ENCODE measurements at regions of chr1 and their contacts with region 1.

Region 1: GRCh38 chr1:196450143-196451095 is 157.8 kb downstream of the KCNT2 start:
- DNase-seq: no peak
- H3K4me3 ChIP-seq: no peak overlapping the region
- H3K27ac ChIP-seq: no peak overlapping the region
- H3K4me1 ChIP-seq: no peaks in the 10 kb centered on the region
- H3K27me3 ChIP-seq: no peaks in the 10 kb centered on the region
- CTCF ChIP-seq: no peak

Region 2: DNA sequence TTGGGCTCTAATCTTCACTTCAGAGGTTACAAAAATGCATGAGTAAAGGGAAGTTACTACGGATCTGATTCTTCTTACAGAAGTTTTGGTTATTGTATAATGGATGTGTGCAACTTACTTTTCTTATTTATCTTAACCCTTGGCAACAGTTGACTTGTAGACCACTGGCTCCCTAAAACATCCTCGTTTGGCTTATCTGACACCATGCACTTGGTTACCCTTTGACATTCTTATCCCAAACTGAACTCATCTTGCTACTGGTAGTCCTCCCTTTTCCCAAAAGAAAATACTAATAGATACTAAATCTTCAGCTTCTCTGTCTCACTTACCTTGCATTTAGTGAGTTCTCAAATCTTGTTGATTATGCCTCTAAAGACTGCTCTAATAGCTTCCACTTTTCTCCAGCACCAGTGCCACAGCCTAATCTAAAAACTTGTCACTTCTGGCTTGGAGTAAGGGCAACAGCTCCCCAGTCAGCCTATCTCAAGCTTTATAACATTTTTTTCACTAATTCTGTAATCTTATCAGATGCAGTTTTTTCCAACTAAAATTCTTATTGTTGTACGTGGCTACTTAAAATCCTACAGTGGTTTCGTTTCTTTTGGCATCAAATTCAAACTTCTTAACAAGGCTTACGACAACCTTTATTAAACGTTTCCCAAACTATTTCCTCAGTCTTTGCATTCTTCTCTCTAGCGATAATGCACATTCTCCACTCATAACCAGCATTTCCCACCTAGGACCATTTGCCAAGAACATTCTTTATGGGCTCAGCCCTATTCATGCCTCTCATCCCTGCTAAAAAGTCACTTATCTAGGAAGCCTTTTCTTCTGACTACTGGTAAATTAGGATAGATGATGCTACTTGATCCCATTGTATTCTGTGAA is 46.4 kb before region 1 on chr1:
- CTCF ChIA-PET with region 1: interaction called, 14 read pairs
- POLR2A ChIA-PET with region 1: no interaction called
- intact Hi-C with region 1: no loop called
- DNase-seq: no peak
- H3K4me3 ChIP-seq: no peak overlapping the region
- H3K27ac ChIP-seq: no peak overlapping the region
- H3K4me1 ChIP-seq: no peaks in the 10 kb centered on the region
- H3K27me3 ChIP-seq: no peaks in the 10 kb centered on the region
- CTCF ChIP-seq: no peak

Measured in PC-9 (cell line).